Thyroid gland (tissue), 4 donors: ENCODE measurements at regions of chr2 and their contacts with region 1.

Region 1: DNA sequence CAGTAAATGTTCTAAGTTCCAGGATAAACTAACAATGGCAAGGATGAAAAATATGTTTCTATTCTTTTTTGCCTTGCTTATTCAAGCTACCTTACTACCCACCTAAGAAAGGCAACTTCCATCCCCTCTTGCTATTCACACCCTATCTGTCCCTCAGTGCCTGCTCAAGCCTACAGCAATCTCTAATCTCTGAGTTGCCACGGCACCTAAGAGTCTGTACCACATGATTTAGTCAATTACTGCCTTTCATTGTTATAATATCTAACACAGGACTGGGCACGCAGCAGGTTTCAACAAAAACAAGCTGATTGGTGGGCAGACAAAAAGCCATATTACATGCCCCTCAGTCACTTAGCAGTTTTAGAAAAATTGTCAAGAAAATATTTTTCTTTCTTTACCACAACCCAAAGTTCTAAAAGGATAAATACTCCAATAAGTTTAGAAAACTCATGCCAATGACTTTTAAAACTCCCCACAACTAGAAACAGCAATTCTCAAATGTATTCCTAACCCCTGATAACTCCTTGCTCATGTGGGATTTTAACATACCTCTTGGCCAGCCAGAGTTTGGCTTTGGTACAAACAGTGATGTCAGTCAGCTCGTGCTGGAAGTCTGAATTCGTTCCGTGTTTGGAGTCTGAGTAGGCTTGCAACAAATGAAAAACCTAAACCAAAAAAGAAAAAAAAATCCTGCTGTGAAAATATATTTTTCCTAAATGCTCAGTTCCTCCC is 117.3 kb upstream of the ZFP36L2 start:
- DNase-seq: peak; percentile 89 to 91
- H3K4me3 ChIP-seq: no peak overlapping the region
- H3K27ac ChIP-seq: peak overlapping the region; percentile 73 to 96 (median 83)
- H3K4me1 ChIP-seq: peaks cover 86 to 89% of the 10 kb centered on the region in 2 donors
- H3K27me3 ChIP-seq: no peaks in the 10 kb centered on the region
- CTCF ChIP-seq: no peak
- POLR2A ChIP-seq: peak in 1 of 2 donors; percentile 52

Region 2: GRCh38 chr2:43105586-43106558 is 237.9 kb before region 1 on chr2:
- intact Hi-C with region 1: no loop called
- DNase-seq: no peak
- H3K4me3 ChIP-seq: no peak overlapping the region
- H3K27ac ChIP-seq: peak overlapping the region in 1 of 3 donors; percentile 31
- H3K4me1 ChIP-seq: peaks cover 18 to 58% of the 10 kb centered on the region in 2 donors
- H3K27me3 ChIP-seq: no peaks in the 10 kb centered on the region
- CTCF ChIP-seq: peak in 1 of 6 experiments; percentile 10
- POLR2A ChIP-seq: no peak

Region 3: GRCh38 chr2:43269706-43270105 is 74.0 kb before region 1 on chr2:
- intact Hi-C with region 1: loop called (anchors 10 kb)
- DNase-seq: peak; percentile 94 to 96
- H3K4me3 ChIP-seq: no peak overlapping the region
- H3K27ac ChIP-seq: peak overlapping the region; percentile 92 to 95 (median 93)
- H3K4me1 ChIP-seq: peaks cover 79 to 96% of the 10 kb centered on the region in 2 donors
- H3K27me3 ChIP-seq: no peaks in the 10 kb centered on the region
- CTCF ChIP-seq: no peak
- POLR2A ChIP-seq: peak in 1 of 2 donors; percentile 67

Region 4: GRCh38 chr2:43438858-43439655 is 95.3 kb after region 1 on chr2:
- intact Hi-C with region 1: no loop called
- DNase-seq: no peak
- H3K4me3 ChIP-seq: no peak overlapping the region
- H3K27ac ChIP-seq: no peak overlapping the region
- H3K4me1 ChIP-seq: peaks cover 0 to 21% of the 10 kb centered on the region in 2 donors
- H3K27me3 ChIP-seq: no peaks in the 10 kb centered on the region
- CTCF ChIP-seq: no peak
- POLR2A ChIP-seq: no peak